Sigmoid colon (tissue), 7 donors: ENCODE measurements at regions of chr22 and their contacts with region 1.

Region 1: GRCh38 chr22:29766632-29767170 is at the start of gene ZMAT5:
- DNase-seq: peak; percentile 97
- H3K4me3 ChIP-seq: peak within 1 kb of the TSS; percentile 75 to 96 (median 88)
- H3K27ac ChIP-seq: peak within 1 kb of the TSS; percentile 88 to 94 (median 90)
- H3K4me1 ChIP-seq: peaks cover 0 to 33% (median 27%) of the 10 kb centered on the region in 4 donors
- H3K27me3 ChIP-seq: no peaks in the 10 kb centered on the region
- CTCF ChIP-seq: no peak
- EP300 ChIP-seq: no peak
- POLR2A ChIP-seq: peak in 1 of 2 donors; percentile 73
- total RNA-seq, gene ZMAT5: 24.6 to 33.7 (median 30.4) TPM

Region 2: GRCh38 chr22:29625090-29625825 is 141.4 kb before region 1 on chr22:
- intact Hi-C with region 1: loop called (anchors 10 kb)
- DNase-seq: peak; percentile 75
- H3K4me3 ChIP-seq: no peak overlapping the region
- H3K27ac ChIP-seq: peak overlapping the region; percentile 31 to 64 (median 51)
- H3K4me1 ChIP-seq: peaks cover 0 to 81% (median 66%) of the 10 kb centered on the region in 4 donors
- H3K27me3 ChIP-seq: no peaks in the 10 kb centered on the region
- CTCF ChIP-seq: peak; percentile 41 to 83 (median 74)
- EP300 ChIP-seq: peak in 2 of 4 donors; percentile 40 to 65
- POLR2A ChIP-seq: no peak

Region 3: DNA sequence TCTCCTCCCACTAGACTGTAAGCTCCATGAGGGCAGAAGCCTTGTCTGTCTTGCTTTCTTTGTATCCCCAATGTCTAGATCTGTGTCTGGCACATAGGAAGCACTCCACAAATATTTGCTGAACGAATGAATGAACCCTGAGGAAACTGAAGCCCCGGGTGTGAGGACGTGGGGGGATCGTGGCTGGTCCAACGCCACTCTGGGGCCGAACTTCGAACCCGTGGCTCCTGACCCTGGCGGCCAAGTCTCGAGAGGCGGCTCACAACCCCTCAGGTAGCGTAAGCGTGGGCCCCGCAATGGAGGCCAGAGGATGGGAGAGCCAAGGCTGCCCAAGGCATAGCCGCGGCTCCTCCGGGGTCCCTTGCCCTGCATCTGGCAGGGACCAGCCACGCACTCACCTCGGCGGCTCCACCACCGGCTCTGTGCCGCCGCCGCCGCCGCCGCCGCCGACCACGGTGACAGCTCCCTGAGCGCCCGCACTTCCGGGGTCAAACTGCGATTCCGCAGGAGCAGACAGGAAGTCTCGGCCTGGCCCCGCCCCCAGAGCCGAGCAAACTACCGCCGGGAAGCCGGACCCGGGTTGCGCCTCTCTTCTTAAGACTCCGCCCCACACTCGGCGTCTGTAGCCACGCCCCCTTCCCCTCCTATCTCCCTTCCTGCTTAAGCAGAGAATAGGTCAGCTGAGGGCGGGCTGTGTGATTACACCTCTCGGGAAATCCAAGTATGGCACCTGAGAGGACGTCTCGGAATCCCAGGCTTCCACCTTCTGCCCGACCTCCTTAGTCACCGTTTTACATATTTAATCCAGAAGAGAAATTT is 71.3 kb after region 1 on chr22 and contains the start of gene ASCC2:
- intact Hi-C with region 1: loop called (anchors 2 kb)
- DNase-seq: peak; percentile 99
- H3K4me3 ChIP-seq: peak within 1 kb of the TSS; percentile 76 to 98 (median 95)
- H3K27ac ChIP-seq: peak within 1 kb of the TSS; percentile 75 to 86 (median 79)
- H3K4me1 ChIP-seq: peaks cover 0 to 32% (median 21%) of the 10 kb centered on the region in 4 donors
- H3K27me3 ChIP-seq: no peaks in the 10 kb centered on the region
- CTCF ChIP-seq: peak in 1 of 4 experiments; percentile 31
- EP300 ChIP-seq: peak in 1 of 4 donors; percentile 1
- POLR2A ChIP-seq: peak; percentile 32 to 53
- total RNA-seq, gene ASCC2: 15.0 to 37.7 (median 20.5) TPM